Panc1 (cell line): ENCODE measurements at regions of chr7 and their contacts with region 1.

Region 1: GRCh38 chr7:79176859-79177477 is 276.5 kb downstream of the MAGI2 start:
- DNase-seq: peak; percentile 35
- ATAC-seq: peak; percentile 66; the same call in 1 of the 2 replicates
- H3K4me3 ChIP-seq: peak overlapping the region in 1 of 2 experiments; percentile 9; a peak in 1 of 4 replicates
- H3K27ac ChIP-seq: no peak overlapping the region; the same call in 1 of the 2 replicates
- H3K4me1 ChIP-seq: peaks cover 6% of the 10 kb centered on the region; the same call in 1 of the 2 replicates
- H3K27me3 ChIP-seq: no peaks in the 10 kb centered on the region
- CTCF ChIP-seq: peak; percentile 76

Region 2: DNA sequence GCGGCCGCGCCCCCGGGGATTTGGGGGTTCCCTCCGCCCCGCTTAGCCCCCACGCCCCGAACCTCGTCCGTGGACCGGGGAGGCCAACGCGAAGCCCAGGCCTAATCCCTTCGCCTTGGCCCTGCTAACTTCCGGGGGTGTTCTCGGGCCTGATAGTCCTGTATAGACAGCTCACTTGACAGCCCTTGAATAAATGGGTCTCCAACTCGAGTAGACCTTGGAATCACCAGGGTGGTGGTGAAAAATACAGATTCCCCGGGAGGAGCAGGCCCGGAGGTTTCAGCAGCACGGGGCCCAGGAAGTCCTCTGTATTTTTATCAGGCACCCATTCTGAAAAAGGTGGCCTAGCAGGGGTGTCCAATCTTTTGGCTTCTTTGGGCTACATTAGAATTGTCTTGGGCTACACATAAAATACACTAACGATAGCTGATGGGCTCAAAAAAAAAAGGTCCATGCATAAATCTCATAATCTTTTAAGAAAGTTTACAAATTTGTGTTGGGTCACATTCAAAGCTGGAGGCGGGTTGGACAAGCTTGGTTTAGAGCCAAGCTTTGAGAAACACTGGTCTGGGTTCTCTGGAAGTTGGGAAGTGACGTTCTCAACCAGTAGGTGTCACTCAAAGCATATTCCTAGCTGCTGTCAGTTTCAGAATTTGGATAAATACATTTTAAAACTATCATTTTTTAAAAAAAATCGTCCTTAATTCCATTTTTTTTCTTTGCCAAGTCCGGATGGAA is 1156.7 kb before region 1 on chr7:
- CTCF ChIA-PET with region 1: no interaction called
- POLR2A ChIA-PET with region 1: no interaction called
- in situ Hi-C with region 1: no loop called
- intact Hi-C with region 1: loop called (anchors 10 kb)
- DNase-seq: peak; percentile 74
- ATAC-seq: peak; percentile 74
- H3K4me3 ChIP-seq: peak overlapping the region; percentile 52 to 71
- H3K27ac ChIP-seq: peak overlapping the region; percentile 77
- H3K4me1 ChIP-seq: peaks cover 13% of the 10 kb centered on the region
- H3K27me3 ChIP-seq: peaks cover 29% of the 10 kb centered on the region
- CTCF ChIP-seq: peak; percentile 88

Region 3: DNA sequence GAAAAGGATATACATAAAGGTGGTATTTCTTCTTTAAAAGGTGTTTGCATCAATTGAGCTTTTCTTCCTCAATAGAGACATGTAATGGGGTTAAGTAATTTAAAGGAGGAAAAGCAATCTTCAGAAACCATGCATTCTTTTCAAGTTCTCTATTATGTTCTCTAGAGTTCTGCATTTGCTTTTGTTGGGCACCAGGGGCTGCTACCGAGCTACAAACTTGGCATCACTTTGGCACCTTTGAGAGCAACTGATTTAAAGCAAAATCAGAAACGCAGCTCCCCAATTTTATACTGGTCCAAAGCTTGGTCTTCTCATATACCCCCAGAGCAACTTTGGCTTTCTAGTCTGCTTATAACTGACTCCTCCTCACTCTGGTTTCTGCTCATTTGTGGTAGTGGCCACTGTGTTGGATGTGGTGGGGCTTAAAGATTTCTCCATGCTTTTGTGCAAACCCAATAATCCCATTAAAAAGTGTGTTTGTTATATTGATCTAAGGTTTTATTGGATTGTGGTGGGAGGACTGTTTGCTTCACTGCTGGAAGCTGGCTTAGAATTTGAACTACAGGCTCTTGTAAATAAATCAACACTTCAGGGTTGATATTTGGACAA is 666.3 kb before region 1 on chr7:
- CTCF ChIA-PET with region 1: no interaction called
- POLR2A ChIA-PET with region 1: no interaction called
- in situ Hi-C with region 1: no loop called
- intact Hi-C with region 1: loop called (anchors 2 kb)
- DNase-seq: peak; percentile 28
- ATAC-seq: peak; percentile 65
- H3K4me3 ChIP-seq: no peak overlapping the region
- H3K27ac ChIP-seq: no peak overlapping the region
- H3K4me1 ChIP-seq: no peaks in the 10 kb centered on the region
- H3K27me3 ChIP-seq: no peaks in the 10 kb centered on the region
- CTCF ChIP-seq: peak; percentile 85

Region 4: DNA sequence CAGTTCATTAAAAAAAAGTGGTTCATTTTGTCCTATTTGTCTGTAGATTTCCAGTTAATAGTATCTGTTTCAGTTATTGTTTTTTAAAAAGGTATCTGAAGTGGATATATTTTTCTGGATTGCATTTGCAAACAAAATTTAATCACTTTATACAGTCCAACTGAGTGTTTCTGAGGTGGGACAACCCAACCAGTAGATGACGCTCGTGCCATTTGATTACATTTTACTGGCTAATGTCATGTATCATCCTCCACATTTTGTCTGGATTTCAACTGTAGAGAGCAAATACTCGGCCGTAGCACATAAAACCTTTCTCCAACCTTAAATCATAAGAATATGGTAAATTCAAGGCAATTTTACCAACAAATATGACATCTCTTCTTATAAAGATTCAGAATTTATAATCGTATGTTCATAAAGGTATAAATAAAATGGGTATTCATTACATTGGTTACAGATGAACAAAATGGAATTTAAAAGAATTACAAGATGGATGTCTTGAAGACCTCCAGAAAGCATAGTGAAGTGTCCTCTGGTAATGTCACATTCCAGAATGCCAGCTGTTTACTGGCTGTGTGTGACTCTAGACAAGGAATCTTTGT is 589.4 kb before region 1 on chr7:
- CTCF ChIA-PET with region 1: no interaction called
- POLR2A ChIA-PET with region 1: no interaction called
- in situ Hi-C with region 1: no loop called
- intact Hi-C with region 1: loop called (anchors 5 kb)
- DNase-seq: peak; percentile 39
- ATAC-seq: peak; percentile 65; the same call in 1 of the 2 replicates
- H3K4me3 ChIP-seq: no peak overlapping the region
- H3K27ac ChIP-seq: no peak overlapping the region
- H3K4me1 ChIP-seq: no peaks in the 10 kb centered on the region
- H3K27me3 ChIP-seq: no peaks in the 10 kb centered on the region
- CTCF ChIP-seq: peak; percentile 74; the same call in 1 of the 2 replicates

Region 5: GRCh38 chr7:78959477-78959876 is 217.5 kb before region 1 on chr7:
- CTCF ChIA-PET with region 1: no interaction called
- POLR2A ChIA-PET with region 1: no interaction called
- in situ Hi-C with region 1: no loop called
- intact Hi-C with region 1: loop called (anchors 10 kb)
- DNase-seq: peak; percentile 86
- ATAC-seq: no peak
- H3K4me3 ChIP-seq: no peak overlapping the region
- H3K27ac ChIP-seq: no peak overlapping the region
- H3K4me1 ChIP-seq: no peaks in the 10 kb centered on the region; the same call in 1 of the 2 replicates
- H3K27me3 ChIP-seq: no peaks in the 10 kb centered on the region
- CTCF ChIP-seq: no peak

Region 6: GRCh38 chr7:79227044-79227443 is 50.1 kb after region 1 on chr7:
- CTCF ChIA-PET with region 1: no interaction called
- POLR2A ChIA-PET with region 1: no interaction called
- in situ Hi-C with region 1: no loop called
- intact Hi-C with region 1: no loop called
- DNase-seq: no peak
- ATAC-seq: no peak
- H3K4me3 ChIP-seq: no peak overlapping the region
- H3K27ac ChIP-seq: no peak overlapping the region
- H3K4me1 ChIP-seq: no peaks in the 10 kb centered on the region; the same call in 1 of the 2 replicates
- H3K27me3 ChIP-seq: no peaks in the 10 kb centered on the region
- CTCF ChIP-seq: no peak

Region 7: DNA sequence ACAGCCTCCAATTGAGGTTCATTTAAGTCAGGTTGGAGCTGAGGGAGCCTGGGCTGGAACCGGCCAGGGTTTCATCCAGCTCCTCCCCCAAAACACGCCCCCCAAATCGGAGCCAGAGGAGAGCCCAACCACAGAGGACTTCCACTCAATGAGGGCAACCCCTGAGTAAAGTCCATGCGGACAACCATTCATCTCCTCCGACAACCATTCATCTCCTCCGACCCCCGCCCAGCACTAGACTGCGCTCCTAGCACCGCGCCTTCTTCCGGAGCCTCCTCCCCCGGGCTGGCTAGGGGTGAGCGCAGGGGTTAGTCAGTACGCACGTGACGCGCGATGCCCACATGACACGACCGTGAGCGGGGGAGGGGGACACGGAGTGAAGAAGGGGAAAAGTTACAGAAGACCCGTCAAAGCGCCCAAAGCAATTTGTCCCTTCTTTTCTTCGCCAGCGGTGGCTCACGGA is 275.1 kb after region 1 on chr7:
- CTCF ChIA-PET with region 1: no interaction called
- POLR2A ChIA-PET with region 1: no interaction called
- in situ Hi-C with region 1: no loop called
- intact Hi-C with region 1: no loop called
- DNase-seq: peak; percentile 83
- ATAC-seq: peak; percentile 88
- H3K4me3 ChIP-seq: peak overlapping the region; percentile 79 to 94
- H3K27ac ChIP-seq: peak overlapping the region; percentile 83
- H3K4me1 ChIP-seq: peaks cover 39% of the 10 kb centered on the region
- H3K27me3 ChIP-seq: no peaks in the 10 kb centered on the region
- CTCF ChIP-seq: no peak

Region 8: DNA sequence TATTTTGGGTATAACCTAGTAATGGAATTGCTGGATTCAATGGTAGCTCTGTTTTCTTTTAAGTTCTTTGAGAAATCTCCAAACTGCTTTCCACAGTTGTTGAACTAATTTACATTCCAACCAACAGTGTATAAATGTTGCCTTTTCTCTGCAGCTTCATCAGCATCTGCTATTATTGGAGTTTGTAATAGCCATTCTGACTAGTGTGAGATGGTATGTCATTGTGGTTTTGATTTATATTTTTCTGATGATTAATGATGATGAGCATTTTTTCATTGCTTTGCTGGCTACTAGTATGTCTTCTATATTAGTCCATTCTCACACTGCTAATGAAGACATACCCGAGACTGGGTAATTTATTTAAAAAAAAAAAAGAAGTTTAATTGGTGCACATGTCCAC is 525.1 kb after region 1 on chr7:
- CTCF ChIA-PET with region 1: no interaction called
- POLR2A ChIA-PET with region 1: no interaction called
- in situ Hi-C with region 1: no loop called
- intact Hi-C with region 1: no loop called
- DNase-seq: no peak
- ATAC-seq: no peak
- H3K4me3 ChIP-seq: no peak overlapping the region
- H3K27ac ChIP-seq: no peak overlapping the region
- H3K4me1 ChIP-seq: no peaks in the 10 kb centered on the region
- H3K27me3 ChIP-seq: no peaks in the 10 kb centered on the region
- CTCF ChIP-seq: no peak

Region 9: DNA sequence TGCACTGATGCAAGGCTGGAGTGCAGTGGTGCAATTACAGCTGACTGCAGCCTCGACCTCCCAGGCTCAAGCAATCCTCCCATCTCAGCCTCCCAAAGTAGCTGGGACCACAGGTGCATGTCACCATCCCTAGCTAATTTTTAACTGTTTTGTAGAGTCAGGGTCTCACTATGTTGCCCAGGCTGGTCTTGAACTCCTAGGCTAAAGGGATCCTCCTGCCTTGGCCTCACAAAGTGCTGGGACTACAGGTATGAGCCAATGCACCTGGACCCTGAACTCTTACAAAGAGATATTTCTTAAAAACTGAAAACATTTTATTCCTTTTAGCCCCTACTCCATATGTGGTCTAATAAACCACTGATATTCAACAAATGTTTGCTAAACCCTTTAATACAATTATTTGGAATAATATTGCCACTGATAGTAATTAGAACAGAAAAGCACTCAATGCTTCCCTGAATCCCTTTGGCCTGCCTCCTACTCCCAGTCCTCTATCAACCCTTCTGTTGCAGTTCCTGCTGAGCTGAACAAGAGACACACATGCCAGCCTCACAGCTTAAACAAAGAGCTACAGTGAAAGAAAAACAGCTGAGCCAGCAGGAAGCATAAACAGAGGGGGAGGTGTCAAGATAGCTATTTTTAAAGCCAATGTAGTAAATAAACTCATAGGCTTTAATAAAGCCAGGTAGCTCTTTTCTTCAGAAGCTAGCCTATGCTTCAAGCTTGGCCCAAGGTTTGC is 950.6 kb after region 1 on chr7:
- CTCF ChIA-PET with region 1: no interaction called
- POLR2A ChIA-PET with region 1: no interaction called
- in situ Hi-C with region 1: no loop called
- intact Hi-C with region 1: no loop called
- DNase-seq: no peak
- ATAC-seq: no peak
- H3K4me3 ChIP-seq: no peak overlapping the region
- H3K27ac ChIP-seq: no peak overlapping the region
- H3K4me1 ChIP-seq: no peaks in the 10 kb centered on the region
- H3K27me3 ChIP-seq: no peaks in the 10 kb centered on the region
- CTCF ChIP-seq: no peak